Sigmoid colon (tissue), 7 donors: ENCODE measurements at regions of chr1 and their contacts with region 1.

Region 1: DNA sequence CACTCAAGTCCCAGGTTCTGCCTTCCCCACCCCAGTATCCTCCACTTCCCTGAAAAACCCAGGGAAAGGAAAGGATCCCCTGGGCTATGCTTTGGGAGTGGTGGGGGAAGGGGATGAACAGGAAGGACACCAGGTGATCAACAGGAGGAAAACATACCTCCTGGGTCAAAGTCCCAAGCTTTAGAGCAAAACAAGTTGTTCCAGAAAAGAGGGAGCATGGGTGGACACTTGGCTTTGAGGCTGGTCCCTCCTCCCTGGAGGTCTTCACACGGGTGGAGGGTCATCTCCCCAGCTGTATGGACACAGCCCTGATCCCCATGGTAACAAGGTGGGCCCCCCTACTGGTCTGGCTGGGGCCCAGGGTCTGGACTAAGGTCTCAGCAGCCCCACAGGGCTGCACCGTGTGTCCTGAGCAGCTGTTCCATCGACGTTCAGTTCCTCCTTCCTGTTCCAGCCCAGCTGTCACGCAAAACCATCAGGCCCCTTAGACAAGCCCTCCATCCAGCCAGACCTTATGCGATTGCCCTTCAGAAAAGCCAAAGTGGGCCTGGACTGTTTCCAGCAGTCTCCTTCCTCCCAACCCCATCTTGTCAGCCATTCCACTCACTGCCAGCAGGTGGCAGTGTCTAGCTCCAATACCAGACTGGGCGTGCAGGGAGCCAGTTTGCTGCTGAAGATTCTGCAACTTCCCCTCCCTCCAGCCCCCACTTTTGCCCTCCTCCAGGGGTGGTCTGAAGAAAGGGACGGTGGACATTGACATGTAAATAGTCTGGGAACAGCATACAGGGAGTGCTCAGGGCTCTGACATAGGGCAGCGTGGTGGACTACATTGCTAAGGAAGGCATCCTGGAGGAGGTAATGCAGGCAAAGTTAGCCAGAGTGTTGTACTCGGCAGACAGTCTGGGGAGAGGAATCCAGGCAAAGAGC is 2.9 kb upstream of the PDZK1IP1 start:
- DNase-seq: peak; percentile 84
- H3K4me3 ChIP-seq: no peak overlapping the region
- H3K27ac ChIP-seq: no peak overlapping the region
- H3K4me1 ChIP-seq: peaks cover 0 to 21% (median 17%) of the 10 kb centered on the region in 4 donors
- H3K27me3 ChIP-seq: peaks cover 0 to 5% (median 0%) of the 10 kb centered on the region in 3 donors
- CTCF ChIP-seq: peak; percentile 58 to 90 (median 84)
- EP300 ChIP-seq: no peak
- POLR2A ChIP-seq: no peak

Region 2: DNA sequence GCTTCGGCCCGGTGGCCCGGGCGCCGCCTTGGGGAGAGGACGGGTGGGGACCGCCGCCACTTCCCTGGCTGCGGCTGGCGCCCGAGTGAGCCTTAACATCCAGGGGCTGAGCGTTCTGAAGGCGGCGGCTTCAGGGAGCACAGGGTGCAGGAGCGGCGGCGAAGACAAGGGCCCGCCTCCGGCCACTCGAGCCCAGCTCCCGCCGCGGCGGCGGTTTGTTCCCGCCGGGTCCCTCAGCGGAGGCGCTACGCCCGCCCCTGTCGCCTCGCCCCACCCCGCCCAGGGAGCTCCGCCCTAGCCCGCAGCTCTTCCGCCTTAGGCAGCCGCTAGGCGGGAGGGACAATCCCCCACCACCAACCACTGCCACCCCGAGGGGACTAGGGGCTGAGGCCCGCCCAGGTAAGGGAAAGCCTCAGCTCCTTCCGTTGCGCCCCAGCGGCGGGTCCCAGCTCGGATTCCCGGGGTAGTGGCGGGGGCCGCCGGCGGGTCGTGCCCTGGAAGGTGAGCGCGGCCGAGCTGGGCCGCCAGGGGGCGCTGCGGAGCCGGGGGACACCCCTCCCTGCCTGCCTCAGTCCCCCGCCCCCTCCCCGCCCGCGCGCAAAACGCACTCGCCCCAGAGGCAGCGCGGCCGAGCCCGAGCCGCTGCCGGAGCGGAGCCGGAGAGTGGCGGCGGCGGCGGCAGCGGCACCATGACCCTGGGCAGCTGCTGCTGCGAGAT is 244.9 kb after region 1 on chr1 and contains the start of gene FOXD2:
- intact Hi-C with region 1: loop called (anchors 5 kb)
- DNase-seq: peak; percentile 88
- H3K4me3 ChIP-seq: peak within 1 kb of the TSS; percentile 46 to 66 (median 56)
- H3K27ac ChIP-seq: peak within 1 kb of the TSS; percentile 56 to 76 (median 72)
- H3K4me1 ChIP-seq: peaks cover 0 to 56% (median 50%) of the 10 kb centered on the region in 4 donors
- H3K27me3 ChIP-seq: peaks cover 68 to 99% (median 93%) of the 10 kb centered on the region in 3 donors
- CTCF ChIP-seq: peak; percentile 90 to 97 (median 94)
- EP300 ChIP-seq: no peak
- POLR2A ChIP-seq: peak in 1 of 2 donors; percentile 70
- total RNA-seq, gene FOXD2: under 0.01 to 0.14 TPM in 2 of 4 donors, not detected in the others